ENCODE measurements at regions of chr17 and their contacts with region 1.

Region 1: DNA sequence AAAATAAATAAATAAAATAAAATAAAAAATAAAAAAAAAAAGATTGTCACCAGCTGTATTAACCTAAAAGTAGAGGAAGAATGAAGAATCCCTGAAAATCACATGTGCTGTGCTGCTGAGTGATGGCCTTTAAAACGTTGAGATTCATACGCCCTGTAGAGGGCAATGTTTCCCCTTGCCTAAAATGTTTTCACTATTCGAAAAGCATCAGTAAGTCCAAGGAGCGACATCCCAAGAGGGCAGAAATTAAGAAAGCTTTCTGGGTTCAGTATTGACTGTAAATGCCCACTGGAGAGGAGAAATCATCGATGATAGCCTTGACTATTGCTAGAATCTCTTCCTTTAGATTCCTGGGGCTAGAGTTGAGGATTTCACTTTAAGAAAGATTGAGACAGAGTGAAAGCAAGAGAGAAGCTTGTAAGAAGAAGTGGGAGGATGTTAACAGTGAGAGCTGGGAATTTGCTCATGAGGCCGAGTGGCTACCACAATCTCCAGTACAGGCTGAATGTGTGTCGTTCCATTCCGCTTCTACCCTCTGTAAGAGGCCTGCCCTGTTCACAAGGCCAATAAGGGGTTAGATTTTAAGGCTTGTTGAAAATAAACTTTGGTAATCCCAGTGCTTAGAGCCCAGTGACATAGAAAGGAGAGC is 170.8 kb upstream of the FAM20A start:
- DNase-seq: no peak
- ATAC-seq: peak; percentile 84

Region 2: DNA sequence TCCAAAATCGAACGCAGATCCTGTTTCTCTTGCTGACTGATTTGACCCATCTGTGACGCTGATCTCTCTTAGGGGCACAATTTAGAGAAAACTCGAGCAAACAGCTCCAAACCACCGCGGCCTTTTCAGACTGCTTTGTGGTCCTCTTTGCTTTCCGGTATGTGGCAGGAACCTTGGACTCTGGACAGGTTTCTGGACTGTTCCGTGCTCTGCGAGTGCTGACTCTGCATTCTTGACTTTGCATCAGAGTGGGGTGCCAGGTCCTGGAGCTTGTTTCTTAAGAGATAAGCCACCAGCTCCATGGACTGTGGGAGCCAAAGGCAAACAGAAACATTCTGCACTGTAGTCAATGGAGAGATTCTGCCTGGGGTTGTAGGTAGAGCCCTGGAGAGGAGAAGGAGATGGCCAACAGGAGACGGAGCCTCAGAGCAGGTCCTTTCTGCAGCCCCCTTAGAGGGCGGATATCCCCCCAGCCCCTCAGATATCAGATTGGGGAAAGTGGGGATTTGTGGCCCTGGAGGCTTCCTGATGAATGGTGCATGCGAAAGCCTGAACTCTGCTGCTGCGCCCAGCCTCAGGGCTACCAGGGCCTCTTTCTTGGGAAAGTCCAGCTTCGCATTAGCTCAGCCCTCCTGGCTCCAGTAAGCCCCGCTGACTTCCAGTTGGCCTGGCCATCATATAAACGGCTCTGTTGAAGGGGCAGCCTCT is 380.3 kb before region 1 on chr17:
- intact Hi-C with region 1: no loop called
- DNase-seq: no peak
- ATAC-seq: peak; percentile 31

Region 3: GRCh38 chr17:68684949-68685357 is 87.0 kb before region 1 on chr17:
- intact Hi-C with region 1: no loop called
- DNase-seq: no peak
- ATAC-seq: peak; percentile 94

Region 4: GRCh38 chr17:68878226-68878885 is 106.4 kb after region 1 on chr17:
- intact Hi-C with region 1: no loop called
- DNase-seq: no peak
- ATAC-seq: no peak

Region 5: DNA sequence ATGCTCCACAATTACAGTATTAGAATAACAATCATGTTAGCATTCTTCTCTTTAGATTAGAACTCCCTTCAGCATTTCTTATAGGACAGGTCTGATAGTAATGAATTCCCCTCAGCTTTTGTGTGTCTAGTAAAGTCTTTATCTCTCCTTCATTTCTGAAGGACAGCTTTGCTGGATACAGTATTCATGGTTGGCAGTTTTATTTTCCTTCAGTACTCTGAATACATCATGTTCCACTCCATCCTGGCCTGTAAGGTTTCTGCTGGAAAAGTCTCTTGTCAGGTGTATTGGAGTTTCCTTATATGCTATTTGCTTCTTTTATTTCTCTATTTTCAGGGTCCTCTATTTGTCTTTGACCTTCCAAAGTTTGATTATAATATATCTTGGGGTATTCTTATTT is 460.7 kb after region 1 on chr17:
- intact Hi-C with region 1: loop called (anchors 5 kb)
- DNase-seq: no peak
- ATAC-seq: no peak

Measured in sciatic nerve (tissue), 2 donors.